GM10248 (cell line): ENCODE measurements at regions of chrX and their contacts with region 1.

Region 1: DNA sequence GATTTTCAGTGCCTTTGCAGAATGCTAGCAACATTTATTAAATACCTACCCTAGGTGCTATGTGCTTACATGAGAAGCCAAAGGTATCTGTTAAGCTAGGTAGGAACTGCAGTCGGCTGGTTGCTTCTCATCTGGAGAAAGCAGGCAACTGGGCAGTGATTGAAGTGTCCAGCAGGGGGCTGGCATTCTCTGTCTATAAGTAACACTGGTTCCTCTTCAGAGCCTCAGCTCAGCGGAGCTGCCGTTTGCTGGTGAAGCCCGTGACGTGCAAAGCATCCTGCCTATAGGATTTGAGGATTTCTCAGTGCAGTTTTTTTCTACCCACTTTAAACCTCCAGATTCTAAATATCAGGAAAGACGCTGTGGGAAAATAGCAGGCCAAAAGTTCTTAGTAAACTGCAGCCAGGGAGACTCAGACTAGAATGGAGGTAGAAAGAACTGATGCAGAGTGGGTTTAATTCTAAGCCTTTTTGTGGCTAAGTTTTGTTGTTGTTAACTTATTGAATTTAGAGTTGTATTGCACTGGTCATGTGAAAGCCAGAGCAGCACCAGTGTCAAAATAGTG is at the start of gene GRPR:
- DNase-seq: peak; percentile 38
- CTCF ChIP-seq: peak; percentile 66

Region 2: DNA sequence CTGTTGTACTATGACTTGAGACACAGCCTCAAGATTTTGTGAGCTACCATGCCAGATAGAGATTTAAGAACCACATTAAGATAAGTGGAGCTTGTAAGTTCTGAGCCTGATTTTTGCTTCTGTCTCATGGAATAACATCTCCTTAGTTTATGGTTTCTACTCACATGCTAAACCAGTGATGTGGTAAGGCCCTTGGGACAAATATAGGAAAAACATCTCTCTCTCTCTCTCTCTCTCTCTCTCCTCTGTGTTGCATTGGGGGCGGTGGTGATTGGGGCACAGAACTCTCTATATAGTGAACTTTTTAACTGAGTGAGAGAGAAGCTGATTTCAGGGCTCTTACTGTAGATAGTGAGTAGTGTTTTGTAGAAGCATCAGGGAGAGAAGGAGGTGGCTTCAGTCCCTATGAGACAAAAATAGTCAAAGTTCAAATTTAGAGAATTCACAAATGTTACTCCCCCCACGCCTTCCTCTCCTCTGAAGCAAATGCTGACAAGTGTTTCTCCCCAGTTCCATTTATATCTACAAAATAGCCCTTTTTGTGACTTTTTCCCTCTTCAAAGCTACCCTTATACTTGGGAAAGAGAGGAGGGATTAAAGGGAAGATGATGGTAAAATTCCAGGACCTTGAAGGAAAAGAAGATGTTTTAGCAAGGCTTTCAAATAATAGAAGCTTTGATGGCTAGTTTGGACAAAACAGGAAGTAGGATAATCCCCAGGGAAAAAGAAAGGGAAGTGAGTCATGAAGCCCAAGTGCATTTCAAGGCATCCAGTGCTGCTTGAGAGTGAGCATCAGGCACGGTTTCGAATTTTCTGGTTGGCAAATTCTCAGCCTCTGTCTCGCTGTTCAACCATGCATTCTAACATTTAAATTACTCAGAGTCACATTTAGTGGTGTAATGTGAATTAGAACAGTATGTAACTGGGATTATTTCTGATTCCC is 134.4 kb before region 1 on chrX:
- CTCF ChIA-PET with region 1: no interaction called
- POLR2A ChIA-PET with region 1: no interaction called
- DNase-seq: no peak
- CTCF ChIP-seq: no peak

Region 3: DNA sequence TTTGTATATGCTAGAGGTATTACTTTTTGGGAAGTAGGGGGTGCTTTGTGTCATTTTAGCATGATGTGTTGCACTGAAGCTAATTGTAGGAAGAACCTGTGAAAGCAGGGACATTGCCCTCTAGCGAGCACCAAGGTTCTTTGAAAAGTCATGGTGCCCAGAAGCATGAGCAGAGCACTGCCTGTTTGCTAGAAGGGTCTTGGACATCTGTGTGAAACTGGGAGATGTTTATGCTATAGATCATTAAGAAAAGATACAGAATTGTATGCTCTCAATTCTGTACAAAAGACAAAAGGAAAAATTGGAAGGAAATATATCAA is 14.8 kb after region 1 on chrX:
- CTCF ChIA-PET with region 1: interaction called, 15 read pairs
- POLR2A ChIA-PET with region 1: no interaction called
- DNase-seq: peak; percentile 15
- CTCF ChIP-seq: peak; percentile 7